SK-MEL-5 (cell line): ENCODE measurements at regions of chr12 and their contacts with region 1.

Region 1: GRCh38 chr12:64714551-64714968 is 44.6 kb downstream of the GNS start:
- DNase-seq: no peak

Region 2: DNA sequence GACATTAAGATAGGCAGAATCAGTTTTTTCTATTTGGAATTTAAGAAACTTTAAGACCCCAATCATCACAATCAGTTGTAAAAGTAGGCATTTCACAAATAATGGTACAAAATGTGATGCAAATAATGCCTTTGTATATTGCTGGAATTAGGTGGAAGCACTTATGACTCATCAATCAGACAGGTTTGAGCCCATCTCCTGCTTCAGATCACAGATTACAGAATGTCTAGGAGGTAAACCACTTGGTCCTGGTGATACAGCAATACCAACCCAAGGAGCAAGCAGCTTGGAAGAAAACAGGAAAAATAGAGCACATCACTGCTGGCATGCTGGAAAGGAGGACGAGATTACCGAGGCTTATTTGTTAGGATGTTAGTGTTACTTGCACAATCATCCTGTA is 381.6 kb before region 1 on chr12:
- in situ Hi-C with region 1: no loop called
- DNase-seq: no peak

Region 3: GRCh38 chr12:64528616-64529015 is 185.9 kb before region 1 on chr12:
- in situ Hi-C with region 1: loop called (anchors 25 kb)
- DNase-seq: no peak